Mucosa of descending colon (tissue), 3 donors: ENCODE measurements at regions of chr15 and their contacts with region 1.

Region 1: DNA sequence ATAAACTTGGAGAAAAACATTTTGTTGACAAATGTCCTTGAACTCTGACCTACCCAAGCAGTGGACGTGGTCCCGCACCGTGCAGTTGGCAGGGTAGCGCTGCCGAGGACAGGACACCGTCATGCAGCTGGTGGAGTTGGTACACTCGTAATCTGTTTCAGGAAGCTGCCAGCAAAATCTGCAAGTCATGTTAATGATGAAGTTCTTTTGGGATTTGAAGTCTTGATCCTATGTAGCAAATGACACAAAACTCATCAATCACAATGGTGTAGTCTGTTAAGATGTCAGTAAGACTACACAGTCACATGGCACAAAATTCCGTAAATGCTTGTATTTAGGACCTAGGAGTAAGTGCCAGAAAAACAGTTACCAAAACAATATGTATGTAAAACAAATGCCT is 5.5 kb downstream of the TM2D3 start:
- DNase-seq: no peak
- ATAC-seq: peak; percentile 34
- H3K4me3 ChIP-seq: no peak overlapping the region
- H3K4me1 ChIP-seq: peaks cover 24% of the 10 kb centered on the region
- CTCF ChIP-seq: no peak

Region 2: DNA sequence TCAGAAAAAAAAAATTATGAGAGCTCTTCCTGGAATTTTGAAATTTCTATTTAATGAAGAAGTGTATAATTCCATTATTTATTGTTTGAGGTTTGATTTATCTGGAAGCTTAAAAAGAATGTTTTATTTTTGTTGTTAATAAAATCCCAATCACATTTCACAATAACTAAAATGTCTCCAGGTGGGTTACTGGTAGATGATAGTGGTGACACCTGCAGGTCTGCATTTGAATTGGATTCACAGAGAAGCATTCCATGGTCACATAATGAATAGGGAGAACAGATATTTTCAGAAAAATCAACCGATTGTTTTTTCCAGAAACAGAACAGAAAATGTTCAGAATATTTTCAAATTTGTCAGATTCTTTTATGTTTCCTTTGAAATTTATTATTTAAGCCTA is 996.0 kb before region 1 on chr15:
- intact Hi-C with region 1: no loop called
- DNase-seq: no peak
- ATAC-seq: no peak
- H3K4me3 ChIP-seq: no peak overlapping the region
- H3K4me1 ChIP-seq: no peaks in the 10 kb centered on the region
- CTCF ChIP-seq: no peak

Region 3: GRCh38 chr15:101303408-101303807 is 343.3 kb before region 1 on chr15:
- intact Hi-C with region 1: loop called (anchors 5 kb)
- DNase-seq: no peak
- ATAC-seq: no peak
- H3K4me3 ChIP-seq: no peak overlapping the region
- H3K4me1 ChIP-seq: no peaks in the 10 kb centered on the region
- CTCF ChIP-seq: no peak